Dorsolateral prefrontal cortex (tissue), 120 donors: ENCODE measurements at regions of chr11 and their contacts with region 1.

Region 1: DNA sequence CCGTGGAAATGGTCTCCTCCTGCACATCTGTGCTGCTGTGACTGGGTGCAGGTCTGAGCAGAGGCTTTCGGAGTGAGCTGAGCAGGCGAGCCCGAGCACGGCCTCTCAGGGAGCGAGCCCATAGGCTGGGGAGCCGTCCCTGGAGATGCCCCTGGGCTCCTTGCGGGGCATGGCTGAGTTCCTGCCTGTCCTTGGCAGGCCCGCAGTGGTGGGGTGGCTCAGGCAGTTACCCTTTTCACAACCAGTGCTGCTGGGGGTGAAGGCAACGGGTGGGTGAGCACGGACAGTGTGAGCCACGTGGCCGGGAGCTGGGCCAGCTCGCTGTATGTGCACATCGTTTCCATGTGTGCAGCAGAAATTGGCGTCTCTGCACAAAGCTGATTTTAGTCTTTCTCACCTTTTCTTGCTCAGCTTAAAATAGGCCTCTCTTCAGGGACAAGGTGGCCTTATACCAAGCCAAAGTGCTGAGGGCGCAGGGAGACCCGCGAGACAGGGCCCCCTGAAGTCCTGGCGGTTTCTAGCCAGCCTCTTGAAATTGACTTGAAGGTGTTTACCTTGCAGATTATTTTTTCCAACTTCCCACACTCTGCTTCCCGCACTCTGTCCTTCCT is at the start of gene TP53AIP1:
- DNase-seq: no peak
- H3K4me3 ChIP-seq: peak within 1 kb of the TSS in 1 of 59 donors; percentile 7
- H3K27ac ChIP-seq: no peak within 1 kb of the TSS
- H3K27me3 ChIP-seq: peaks cover 0 to 18% (median 0%) of the 10 kb centered on the region in 45 donors
- CTCF ChIP-seq: no peak
- total RNA-seq, gene TP53AIP1: 0.22 to 3.7 (median 1.1) TPM in 119 of 120 experiments, not detected in the other

Region 2: GRCh38 chr11:128904656-128905344 is 38.1 kb before region 1 on chr11:
- intact Hi-C with region 1: loop called in 1 of 2 experiments (anchors 5 kb)
- DNase-seq: no peak
- H3K4me3 ChIP-seq: peak overlapping the region; percentile 19 to 72 (median 52)
- H3K27ac ChIP-seq: peak overlapping the region in 41 of 59 donors; percentile 2 to 76 (median 49)
- H3K27me3 ChIP-seq: peaks cover 0 to 43% (median 0%) of the 10 kb centered on the region in 45 donors
- CTCF ChIP-seq: no peak